Mammary epithelial cell (primary cell): ENCODE measurements at regions of chr5 and their contacts with region 1.

Region 1: DNA sequence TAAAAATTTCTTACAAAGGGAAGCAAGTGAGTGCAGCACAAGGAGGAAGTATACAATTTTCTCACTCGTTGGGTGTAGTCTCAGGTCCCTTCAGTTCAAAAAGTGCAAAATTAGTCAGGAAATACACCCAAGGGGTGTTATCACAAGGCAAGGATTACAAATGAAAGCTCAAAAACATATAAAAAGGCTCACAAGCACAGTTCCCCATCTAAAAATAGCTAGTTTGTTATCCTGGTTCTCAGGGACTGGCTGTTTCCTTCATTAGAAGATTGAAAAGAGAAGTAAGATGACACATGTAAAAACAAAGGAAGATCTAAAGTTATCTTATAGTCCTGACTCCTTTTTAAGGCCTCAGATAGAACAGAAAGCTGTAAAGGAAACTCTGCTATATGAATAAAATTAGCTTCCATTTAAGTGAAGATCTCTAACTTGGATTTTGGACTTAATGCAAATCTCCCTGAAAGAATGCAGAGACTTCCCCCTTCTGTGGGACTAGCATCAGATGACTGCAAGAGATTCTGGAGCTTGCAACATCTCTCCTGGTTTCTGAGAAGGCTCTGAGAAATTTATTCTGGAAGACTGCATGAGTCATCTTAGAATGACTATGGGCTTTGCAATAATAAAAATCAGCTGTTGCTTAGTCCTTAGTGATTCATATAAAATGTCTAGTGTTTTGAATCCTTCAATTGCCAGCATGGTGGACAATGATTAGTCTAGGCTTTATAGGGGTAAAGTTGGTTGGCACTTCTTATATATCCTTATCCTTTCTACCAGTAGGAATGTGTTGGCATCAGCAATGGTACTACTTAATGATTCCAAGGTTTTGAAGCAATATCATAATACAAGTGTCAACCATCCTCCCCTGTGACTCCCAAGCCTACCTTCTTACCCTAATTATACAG is 25.4 kb downstream of the DAB2 start:
- DNase-seq: peak; percentile 95
- H3K4me3 ChIP-seq: no peak overlapping the region
- H3K27ac ChIP-seq: peak overlapping the region; percentile 95
- H3K4me1 ChIP-seq: peaks cover 42% of the 10 kb centered on the region
- H3K27me3 ChIP-seq: no peaks in the 10 kb centered on the region
- CTCF ChIP-seq: no peak

Region 2: GRCh38 chr5:39412721-39413394 is 13.5 kb after region 1 on chr5:
- CTCF ChIA-PET with region 1: no interaction called
- dilution Hi-C with region 1: no loop called
- in situ Hi-C with region 1: no loop called
- intact Hi-C with region 1: loop called (anchors 2 kb)
- DNase-seq: peak; percentile 74
- H3K4me3 ChIP-seq: no peak overlapping the region
- H3K27ac ChIP-seq: peak overlapping the region; percentile 13
- H3K4me1 ChIP-seq: peaks cover 34% of the 10 kb centered on the region
- H3K27me3 ChIP-seq: no peaks in the 10 kb centered on the region
- CTCF ChIP-seq: no peak

Region 3: DNA sequence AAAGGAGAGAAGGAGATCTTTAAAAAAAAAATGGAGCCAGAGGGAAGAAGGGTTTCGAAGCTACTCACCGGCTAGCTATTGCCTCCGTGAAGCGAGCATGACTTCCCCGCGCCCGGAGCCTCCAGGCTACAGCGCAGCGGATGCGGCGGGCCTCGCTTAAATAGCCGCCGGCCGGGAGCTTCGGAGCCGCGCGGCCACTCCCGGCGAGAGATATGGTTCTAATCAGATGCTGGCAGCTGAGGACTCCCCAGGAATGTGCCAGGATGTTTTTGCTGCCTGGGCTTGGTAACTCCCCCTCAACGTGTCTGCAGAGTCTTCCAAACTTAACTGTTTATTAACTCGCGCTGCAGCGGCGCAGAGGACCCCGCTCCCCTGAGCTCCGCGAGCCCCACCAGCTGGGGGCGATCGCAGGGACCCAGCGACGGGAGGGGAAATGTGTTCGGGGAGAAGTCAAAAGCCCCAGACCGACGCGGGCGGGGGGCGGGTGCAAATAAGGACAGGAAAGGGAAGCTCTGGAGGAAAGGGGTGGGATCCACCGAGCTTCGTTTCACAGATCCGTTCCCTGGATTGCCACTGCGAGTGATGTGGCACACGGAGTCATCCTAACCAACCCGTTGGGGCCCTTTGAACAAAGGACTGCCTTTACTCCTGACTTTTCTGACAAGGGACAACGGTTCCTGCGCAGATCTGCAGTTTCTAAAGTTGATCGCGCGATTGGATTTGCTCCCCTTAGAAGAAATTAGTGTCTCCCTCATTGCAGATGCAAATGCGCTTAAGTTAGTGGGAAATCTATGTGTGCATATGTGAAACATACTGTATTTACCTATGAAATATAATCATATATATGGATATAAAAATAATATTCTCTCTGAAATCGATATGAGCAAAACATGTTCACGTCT is 25.6 kb after region 1 on chr5 and contains the start of gene DAB2:
- CTCF ChIA-PET with region 1: interaction called, 8 read pairs
- dilution Hi-C with region 1: no loop called
- in situ Hi-C with region 1: no loop called
- intact Hi-C with region 1: loop called (anchors 1 kb)
- DNase-seq: peak; percentile 86
- H3K4me3 ChIP-seq: peak within 1 kb of the TSS; percentile 62 to 72 (median 66)
- H3K27ac ChIP-seq: peak within 1 kb of the TSS; percentile 79
- H3K4me1 ChIP-seq: peaks cover 41% of the 10 kb centered on the region
- H3K27me3 ChIP-seq: no peaks in the 10 kb centered on the region
- CTCF ChIP-seq: peak; percentile 11 to 49
- total RNA-seq, gene DAB2: 33.8 to 67.7 TPM

Region 4: DNA sequence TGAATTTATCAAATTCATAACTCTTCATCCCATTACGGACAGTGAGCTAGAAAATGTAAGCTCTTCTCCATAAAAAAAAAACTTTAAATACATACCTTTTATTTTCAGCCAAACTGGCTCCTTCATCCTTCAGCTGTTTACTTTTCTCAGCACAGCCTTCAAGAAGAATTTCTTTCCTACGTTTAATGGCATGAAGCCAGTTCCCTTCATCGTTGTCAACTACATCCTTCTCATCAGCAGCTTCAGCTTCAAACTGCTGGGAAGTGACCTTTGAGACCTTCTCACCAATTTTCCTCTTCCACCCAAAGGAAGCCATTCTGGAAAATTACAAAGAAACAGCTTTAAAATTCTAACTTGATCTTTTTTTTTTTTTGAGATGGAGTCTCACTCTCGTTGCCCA is 1347.3 kb after region 1 on chr5:
- CTCF ChIA-PET with region 1: no interaction called
- dilution Hi-C with region 1: no loop called
- in situ Hi-C with region 1: no loop called
- intact Hi-C with region 1: loop called (anchors 10 kb)
- DNase-seq: no peak
- H3K4me3 ChIP-seq: no peak overlapping the region
- H3K27ac ChIP-seq: no peak overlapping the region
- H3K4me1 ChIP-seq: no peaks in the 10 kb centered on the region
- H3K27me3 ChIP-seq: no peaks in the 10 kb centered on the region
- CTCF ChIP-seq: no peak